ENCODE measurements at regions of chr9 and their contacts with region 1.

Region 1: GRCh38 chr9:36873247-36873875 is 160.7 kb downstream of the PAX5 start:
- DNase-seq: peak; percentile 72
- H3K4me3 ChIP-seq: no peak overlapping the region
- H3K27ac ChIP-seq: no peak overlapping the region
- H3K4me1 ChIP-seq: no peaks in the 10 kb centered on the region
- H3K27me3 ChIP-seq: no peaks in the 10 kb centered on the region
- CTCF ChIP-seq: peak; percentile 95

Region 2: DNA sequence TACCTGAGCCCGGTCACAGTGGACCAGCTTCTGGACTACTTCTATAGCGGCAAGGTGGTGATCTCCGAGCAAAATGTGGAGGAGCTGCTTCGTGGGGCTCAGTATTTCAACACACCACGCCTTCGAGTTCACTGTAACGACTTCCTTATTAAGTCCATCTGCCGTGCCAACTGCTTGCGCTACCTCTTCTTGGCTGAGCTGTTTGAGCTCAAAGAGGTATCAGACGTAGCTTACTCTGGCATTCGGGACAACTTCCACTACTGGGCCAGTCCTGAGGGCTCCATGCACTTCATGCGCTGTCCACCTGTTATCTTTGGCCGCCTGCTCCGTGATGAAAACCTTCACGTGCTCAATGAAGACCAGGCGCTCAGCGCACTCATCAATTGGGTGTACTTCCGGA is 703.6 kb before region 1 on chr9:
- CTCF ChIA-PET with region 1: no interaction called
- POLR2A ChIA-PET with region 1: no interaction called
- intact Hi-C with region 1: no loop called
- DNase-seq: no peak
- H3K4me3 ChIP-seq: no peak overlapping the region
- H3K27ac ChIP-seq: no peak overlapping the region
- H3K4me1 ChIP-seq: no peaks in the 10 kb centered on the region
- H3K27me3 ChIP-seq: no peaks in the 10 kb centered on the region
- CTCF ChIP-seq: no peak

Region 3: GRCh38 chr9:37262410-37262809 is 389.0 kb after region 1 on chr9:
- CTCF ChIA-PET with region 1: no interaction called
- POLR2A ChIA-PET with region 1: no interaction called
- intact Hi-C with region 1: loop called (anchors 5 kb)
- DNase-seq: peak; percentile 68
- H3K4me3 ChIP-seq: no peak overlapping the region
- H3K27ac ChIP-seq: no peak overlapping the region
- H3K4me1 ChIP-seq: peaks cover 11% of the 10 kb centered on the region
- H3K27me3 ChIP-seq: no peaks in the 10 kb centered on the region
- CTCF ChIP-seq: peak; percentile 80

Measured in A673 (cell line).